PC-9 (cell line): ENCODE measurements at regions of chr7 and their contacts with region 1.

Region 1: GRCh38 chr7:36366718-36367560 is 22.7 kb upstream of the ANLN start:
- DNase-seq: peak; percentile 84 to 97
- H3K4me3 ChIP-seq: peak overlapping the region; percentile 86
- H3K27ac ChIP-seq: no peak overlapping the region; the same call in 1 of the 2 replicates
- H3K4me1 ChIP-seq: peaks cover 13% of the 10 kb centered on the region
- H3K27me3 ChIP-seq: no peaks in the 10 kb centered on the region
- CTCF ChIP-seq: peak; percentile 95

Region 2: GRCh38 chr7:36336390-36336789 is 30.5 kb before region 1 on chr7:
- CTCF ChIA-PET with region 1: interaction called, 16 read pairs
- POLR2A ChIA-PET with region 1: no interaction called
- intact Hi-C with region 1: no loop called
- DNase-seq: no peak
- H3K4me3 ChIP-seq: no peak overlapping the region
- H3K27ac ChIP-seq: no peak overlapping the region
- H3K4me1 ChIP-seq: no peaks in the 10 kb centered on the region
- H3K27me3 ChIP-seq: no peaks in the 10 kb centered on the region
- CTCF ChIP-seq: no peak

Region 3: GRCh38 chr7:36396150-36396549 is 29.2 kb after region 1 on chr7:
- CTCF ChIA-PET with region 1: interaction called, 14 read pairs
- POLR2A ChIA-PET with region 1: interaction called, 9 read pairs
- intact Hi-C with region 1: loop called (anchors 5 kb)
- DNase-seq: no peak
- H3K4me3 ChIP-seq: no peak overlapping the region
- H3K27ac ChIP-seq: no peak overlapping the region; the same call in 1 of the 2 replicates
- H3K4me1 ChIP-seq: peaks cover 36% of the 10 kb centered on the region
- H3K27me3 ChIP-seq: no peaks in the 10 kb centered on the region
- CTCF ChIP-seq: no peak

Region 4: GRCh38 chr7:36526863-36527548 is 160.1 kb after region 1 on chr7:
- CTCF ChIA-PET with region 1: no interaction called
- POLR2A ChIA-PET with region 1: no interaction called
- intact Hi-C with region 1: loop called (anchors 10 kb)
- DNase-seq: peak; percentile 51 to 59
- H3K4me3 ChIP-seq: no peak overlapping the region
- H3K27ac ChIP-seq: no peak overlapping the region
- H3K4me1 ChIP-seq: peaks cover 6% of the 10 kb centered on the region; the same call in 1 of the 2 replicates
- H3K27me3 ChIP-seq: peaks cover 12% of the 10 kb centered on the region
- CTCF ChIP-seq: no peak